ENCODE measurements at regions of chr12 and their contacts with region 1.

Region 1: DNA sequence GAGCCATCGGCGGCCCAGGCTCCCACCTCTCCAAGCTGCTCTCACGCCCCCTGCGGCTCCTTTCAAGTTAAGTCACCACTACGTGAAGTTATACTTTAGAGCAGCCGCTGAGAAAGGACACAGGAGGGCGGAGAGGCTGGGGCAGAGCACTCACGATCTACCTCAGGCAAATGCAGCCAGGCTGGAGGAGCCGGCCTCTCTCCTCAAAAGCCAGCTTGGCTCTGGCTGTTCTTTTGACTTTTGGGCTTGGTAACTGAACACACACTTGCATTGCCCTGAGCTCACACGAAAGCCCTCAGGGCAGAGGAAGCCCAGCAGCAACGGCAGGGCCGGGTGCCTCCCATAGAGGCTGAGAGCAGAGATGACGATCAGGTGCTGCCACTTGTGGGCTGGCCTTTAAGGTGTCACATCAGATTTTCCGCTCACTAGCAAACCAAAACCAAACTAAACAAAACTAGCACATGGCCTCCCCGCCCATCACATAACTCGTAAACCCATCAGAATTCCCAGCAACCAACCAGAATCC is 75.2 kb downstream of the PITPNM2 start:
- DNase-seq: peak; percentile 78
- ATAC-seq: peak; percentile 89
- H3K4me3 ChIP-seq: peak overlapping the region in 2 of 3 experiments; percentile 27 to 56; a peak in 3 of 6 replicates
- H3K27ac ChIP-seq: peak overlapping the region; percentile 43
- H3K4me1 ChIP-seq: peaks cover 63% of the 10 kb centered on the region
- H3K27me3 ChIP-seq: no peaks in the 10 kb centered on the region
- CTCF ChIP-seq: peak; percentile 73
- EP300 ChIP-seq: no peak
- POLR2A ChIP-seq: no peak
- RAD21 ChIP-seq: no peak

Region 2: DNA sequence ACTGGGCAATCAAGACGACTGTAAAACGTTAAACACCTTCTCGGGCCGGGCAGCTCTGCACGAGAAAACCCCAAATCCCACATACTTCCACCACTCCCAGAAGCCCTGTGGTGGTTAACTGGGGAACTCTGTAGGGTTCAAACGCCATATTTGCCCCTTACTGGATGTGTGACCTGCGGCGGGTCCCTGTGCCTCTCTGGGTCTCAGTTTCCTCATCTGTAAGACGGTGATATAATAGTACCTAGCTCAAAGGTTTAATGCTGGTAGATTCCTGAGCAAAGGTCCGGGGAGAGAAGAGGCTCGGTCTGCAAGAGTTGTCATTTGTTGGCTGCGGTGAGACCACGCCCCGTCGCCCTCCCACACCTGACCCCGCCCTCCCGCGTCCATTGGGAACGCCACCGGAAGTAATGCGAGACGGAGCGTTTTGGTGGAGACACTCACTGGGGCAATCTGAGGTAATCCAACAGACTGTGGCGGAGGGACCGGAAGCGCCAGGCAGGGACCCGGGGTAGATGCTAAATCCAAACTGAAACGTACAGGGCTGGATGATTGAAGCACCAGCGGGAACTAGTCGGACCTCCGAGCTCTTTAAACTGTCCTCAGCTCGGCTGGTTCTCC is 101.3 kb before region 1 on chr12:
- CTCF ChIA-PET with region 1: no interaction called
- POLR2A ChIA-PET with region 1: no interaction called
- in situ Hi-C with region 1: no loop called
- intact Hi-C with region 1: loop called (anchors 5 kb)
- DNase-seq: peak; percentile 96
- ATAC-seq: peak; percentile 86
- H3K4me3 ChIP-seq: peak overlapping the region; percentile 83 to 95 (median 90)
- H3K27ac ChIP-seq: peak overlapping the region; percentile 92
- H3K4me1 ChIP-seq: peaks cover 38% of the 10 kb centered on the region
- H3K27me3 ChIP-seq: no peaks in the 10 kb centered on the region; a peak in 1 of 5 replicates
- CTCF ChIP-seq: no peak
- EP300 ChIP-seq: no peak; a peak in 1 of 4 replicates
- POLR2A ChIP-seq: peak in 1 of 2 experiments; percentile 43; a peak in 1 of 4 replicates
- RAD21 ChIP-seq: no peak

Region 3: DNA sequence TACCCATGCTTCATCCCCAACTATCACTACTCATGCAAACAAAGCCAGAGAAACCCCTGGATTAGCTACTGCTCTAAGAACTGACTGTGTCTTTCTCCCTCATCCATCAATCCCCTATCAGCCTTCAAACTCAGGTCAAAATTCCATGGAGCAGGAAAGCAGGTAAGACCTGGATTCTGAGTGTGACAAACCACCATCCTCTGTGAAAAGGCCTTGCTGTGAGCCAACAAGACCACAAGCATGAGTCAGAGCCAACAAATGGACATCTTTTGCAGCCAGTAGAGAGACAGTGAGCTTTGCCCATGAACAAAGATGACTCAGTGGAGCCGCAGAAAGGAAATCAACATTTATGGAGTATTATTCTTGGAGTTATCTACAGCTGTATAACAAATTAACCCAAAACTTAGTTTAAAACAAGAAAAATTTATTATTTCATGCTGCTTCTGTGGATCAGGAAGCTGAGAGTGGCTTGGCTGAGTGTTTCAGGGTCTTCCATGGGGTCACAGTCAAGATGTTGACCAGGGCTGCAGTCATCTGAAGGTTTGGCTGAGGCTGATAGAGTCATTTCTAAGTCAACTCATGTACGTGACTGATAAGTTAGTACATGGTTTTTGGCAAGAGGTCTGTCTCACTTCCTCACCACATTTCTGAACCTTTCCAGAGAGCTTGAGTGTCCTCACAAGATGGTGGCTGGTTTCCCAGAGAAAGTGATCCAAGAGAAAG is 14.1 kb after region 1 on chr12:
- CTCF ChIA-PET with region 1: no interaction called
- POLR2A ChIA-PET with region 1: interaction called, 10 read pairs
- in situ Hi-C with region 1: no loop called
- intact Hi-C with region 1: no loop called
- DNase-seq: peak; percentile 88
- ATAC-seq: peak; percentile 73
- H3K4me3 ChIP-seq: no peak overlapping the region
- H3K27ac ChIP-seq: peak overlapping the region; percentile 36
- H3K4me1 ChIP-seq: peaks cover 85% of the 10 kb centered on the region
- H3K27me3 ChIP-seq: no peaks in the 10 kb centered on the region
- CTCF ChIP-seq: no peak
- EP300 ChIP-seq: peak in 1 of 2 experiments; percentile 50; a peak in 1 of 4 replicates
- POLR2A ChIP-seq: no peak
- RAD21 ChIP-seq: no peak

Region 4: GRCh38 chr12:123163227-123163626 is 87.5 kb after region 1 on chr12:
- CTCF ChIA-PET with region 1: no interaction called
- POLR2A ChIA-PET with region 1: no interaction called
- in situ Hi-C with region 1: no loop called
- intact Hi-C with region 1: no loop called
- DNase-seq: no peak
- ATAC-seq: no peak
- H3K4me3 ChIP-seq: no peak overlapping the region
- H3K27ac ChIP-seq: no peak overlapping the region
- H3K4me1 ChIP-seq: peaks cover 38% of the 10 kb centered on the region
- H3K27me3 ChIP-seq: no peaks in the 10 kb centered on the region
- CTCF ChIP-seq: no peak
- EP300 ChIP-seq: no peak
- POLR2A ChIP-seq: no peak
- RAD21 ChIP-seq: no peak

Measured in HepG2 (cell line).